ENCODE measurements at regions of chr3 and their contacts with region 1.

Region 1: GRCh38 chr3:40623567-40623966 is 98.8 kb downstream of the ZNF621 start:
- DNase-seq: peak; percentile 96
- ATAC-seq: peak; percentile 92
- H3K4me3 ChIP-seq: peak overlapping the region; percentile 68 to 89 (median 84)
- H3K4me3 Mint-ChIP-seq: no peak overlapping the region
- H3K27ac ChIP-seq: peak overlapping the region; percentile 96 to 98
- H3K27ac Mint-ChIP-seq: no peak overlapping the region
- H3K4me1 ChIP-seq: peaks cover 33 to 48% of the 10 kb centered on the region in 2 donors
- H3K4me1 Mint-ChIP-seq: peaks cover 14% of the 10 kb centered on the region
- H3K27me3 ChIP-seq: no peaks in the 10 kb centered on the region
- H3K27me3 Mint-ChIP-seq: no peaks in the 10 kb centered on the region
- CTCF ChIP-seq: no peak

Region 2: DNA sequence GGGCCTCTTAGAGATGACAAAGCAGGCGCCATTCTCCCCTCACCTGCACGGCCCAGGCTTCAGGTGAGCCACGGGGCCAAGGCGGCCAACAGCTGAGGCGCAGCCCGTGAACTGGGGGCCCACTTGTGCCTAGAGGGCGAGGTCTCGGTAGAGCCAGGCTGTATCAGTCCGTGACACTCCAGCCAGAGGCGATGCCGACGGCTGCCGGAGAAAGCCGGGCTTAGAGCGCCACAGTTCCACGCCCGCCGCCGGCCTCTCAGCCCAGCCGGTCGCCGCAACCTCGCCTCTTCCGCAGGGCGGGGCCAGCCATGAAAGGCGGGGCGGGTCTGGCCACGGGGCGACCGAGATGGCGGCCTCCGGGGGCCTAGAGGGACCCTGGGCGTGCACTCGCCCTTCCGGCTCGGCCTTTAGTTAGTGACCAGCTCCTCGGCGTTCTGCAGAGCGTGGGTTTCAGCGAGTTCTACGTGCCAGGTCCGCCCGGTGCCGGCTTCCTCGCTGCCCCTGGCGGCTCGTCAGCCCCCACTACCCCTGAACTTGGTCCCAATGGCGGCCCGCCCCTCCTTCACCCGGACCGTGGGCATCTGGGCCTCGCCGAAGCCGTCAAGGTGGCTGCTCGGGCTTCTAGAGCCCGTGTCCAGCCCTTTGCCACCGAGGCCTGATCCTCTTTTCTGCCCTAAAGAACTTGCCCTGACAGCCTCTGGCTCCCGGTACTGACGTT is 98.8 kb before region 1 on chr3 and contains the start of gene ZNF621:
- CTCF ChIA-PET with region 1: no interaction called
- POLR2A ChIA-PET with region 1: no interaction called
- intact Hi-C with region 1: loop called (anchors 1 kb)
- DNase-seq: peak; percentile 89
- ATAC-seq: peak; percentile 99
- H3K4me3 ChIP-seq: peak within 1 kb of the TSS; percentile 27 to 94 (median 87)
- H3K4me3 Mint-ChIP-seq: peak within 1 kb of the TSS; percentile 96
- H3K27ac ChIP-seq: peak within 1 kb of the TSS; percentile 86 to 91
- H3K27ac Mint-ChIP-seq: peak within 1 kb of the TSS; percentile 94
- H3K4me1 ChIP-seq: peaks cover 16% of the 10 kb centered on the region in 2 donors
- H3K4me1 Mint-ChIP-seq: peaks cover 24% of the 10 kb centered on the region
- H3K27me3 ChIP-seq: no peaks in the 10 kb centered on the region
- H3K27me3 Mint-ChIP-seq: no peaks in the 10 kb centered on the region
- CTCF ChIP-seq: no peak
- total RNA-seq, gene ZNF621: 34.6 and 35.2 TPM in 2 replicates

Region 3: GRCh38 chr3:40672861-40673260 is 49.3 kb after region 1 on chr3:
- CTCF ChIA-PET with region 1: no interaction called
- POLR2A ChIA-PET with region 1: interaction called, 3 read pairs
- intact Hi-C with region 1: loop called (anchors 5 kb)
- DNase-seq: no peak
- ATAC-seq: no peak
- H3K4me3 ChIP-seq: no peak overlapping the region
- H3K4me3 Mint-ChIP-seq: no peak overlapping the region
- H3K27ac ChIP-seq: no peak overlapping the region
- H3K27ac Mint-ChIP-seq: no peak overlapping the region
- H3K4me1 ChIP-seq: peaks cover 2 to 9% of the 10 kb centered on the region in 2 donors
- H3K4me1 Mint-ChIP-seq: peaks cover 14% of the 10 kb centered on the region
- H3K27me3 ChIP-seq: no peaks in the 10 kb centered on the region
- H3K27me3 Mint-ChIP-seq: no peaks in the 10 kb centered on the region
- CTCF ChIP-seq: no peak

Region 4: DNA sequence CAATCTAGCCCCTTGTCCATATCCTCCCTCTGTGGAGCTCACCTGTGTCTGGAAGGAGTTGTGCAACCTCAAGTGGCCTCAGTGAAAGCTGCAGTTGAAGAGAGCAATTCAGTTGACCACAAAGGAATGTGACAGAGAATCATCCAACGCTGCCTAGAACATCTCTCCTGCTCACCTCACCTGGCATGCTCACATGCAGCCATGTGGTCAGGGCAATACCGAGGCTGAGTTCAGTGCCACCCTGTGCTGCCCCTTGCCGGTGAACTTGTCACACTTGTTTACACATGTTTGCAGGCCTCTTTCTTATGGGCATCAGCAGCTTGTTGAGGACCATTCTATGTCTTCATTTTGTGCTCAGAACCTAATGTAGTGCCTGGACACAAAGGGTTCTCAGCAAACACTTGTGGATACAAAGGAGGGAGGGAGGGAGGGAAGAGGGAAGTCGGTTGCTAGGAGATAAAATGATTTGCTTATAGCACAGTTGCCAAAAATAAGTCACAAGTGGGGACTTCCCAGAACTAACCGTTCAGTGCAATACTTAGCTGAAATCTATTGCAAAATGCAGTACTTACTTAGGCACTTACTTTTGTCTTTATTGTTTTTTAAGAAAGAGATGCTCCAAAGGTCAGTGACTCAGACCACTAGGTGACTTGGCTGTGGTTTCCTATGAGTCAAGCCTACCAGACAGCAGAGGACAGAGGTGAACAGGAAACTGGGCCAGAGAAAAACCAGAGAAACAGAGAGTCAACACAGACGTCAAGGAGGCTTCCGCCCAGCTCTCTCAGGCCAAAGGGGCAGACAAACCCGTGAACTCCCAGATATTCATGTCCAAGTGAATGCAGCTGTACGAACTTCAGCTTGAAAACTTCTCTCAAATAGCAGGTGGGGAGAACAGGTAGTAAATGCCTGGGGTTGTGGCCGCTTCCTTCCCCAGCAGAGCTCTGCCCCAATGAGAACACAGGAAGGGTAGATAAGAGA is 347.9 kb after region 1 on chr3:
- CTCF ChIA-PET with region 1: no interaction called
- POLR2A ChIA-PET with region 1: interaction called, 3 read pairs
- intact Hi-C with region 1: loop called (anchors 1 kb)
- DNase-seq: peak; percentile 75
- ATAC-seq: peak; percentile 80
- H3K4me3 ChIP-seq: peak overlapping the region in 4 of 5 experiments; percentile 9 to 41 (median 22)
- H3K4me3 Mint-ChIP-seq: peak overlapping the region; percentile 69
- H3K27ac ChIP-seq: peak overlapping the region; percentile 92 to 99
- H3K27ac Mint-ChIP-seq: peak overlapping the region; percentile 88
- H3K4me1 ChIP-seq: peaks cover 51 to 56% of the 10 kb centered on the region in 2 donors
- H3K4me1 Mint-ChIP-seq: peaks cover 66% of the 10 kb centered on the region
- H3K27me3 ChIP-seq: no peaks in the 10 kb centered on the region
- H3K27me3 Mint-ChIP-seq: no peaks in the 10 kb centered on the region
- CTCF ChIP-seq: no peak

Region 5: GRCh38 chr3:42012935-42013690 is 1389.5 kb after region 1 on chr3:
- CTCF ChIA-PET with region 1: no interaction called
- POLR2A ChIA-PET with region 1: no interaction called
- intact Hi-C with region 1: loop called (anchors 2 kb)
- DNase-seq: peak; percentile 92
- ATAC-seq: peak; percentile 71
- H3K4me3 ChIP-seq: peak overlapping the region; percentile 60 to 96 (median 92)
- H3K4me3 Mint-ChIP-seq: peak overlapping the region; percentile 97
- H3K27ac ChIP-seq: peak overlapping the region; percentile 99 to 100
- H3K27ac Mint-ChIP-seq: peak overlapping the region; percentile 99
- H3K4me1 ChIP-seq: peaks cover 44 to 49% of the 10 kb centered on the region in 2 donors
- H3K4me1 Mint-ChIP-seq: peaks cover 56% of the 10 kb centered on the region
- H3K27me3 ChIP-seq: no peaks in the 10 kb centered on the region
- H3K27me3 Mint-ChIP-seq: no peaks in the 10 kb centered on the region
- CTCF ChIP-seq: no peak